B cell (primary cell): ENCODE measurements at regions of chr2 and their contacts with region 1.

Region 1: GRCh38 chr2:43105586-43106558 is 120.5 kb downstream of the ZFP36L2 start:
- DNase-seq: peak; percentile 78
- ATAC-seq: peak; percentile 65
- H3K4me3 ChIP-seq: no peak overlapping the region
- H3K4me3 Mint-ChIP-seq: peak overlapping the region; percentile 78
- H3K27ac ChIP-seq: peak overlapping the region; percentile 80 to 88
- H3K27ac Mint-ChIP-seq: peak overlapping the region; percentile 96
- H3K4me1 ChIP-seq: peaks cover 58 to 74% of the 10 kb centered on the region in 2 donors
- H3K4me1 Mint-ChIP-seq: peaks cover 61% of the 10 kb centered on the region
- H3K27me3 ChIP-seq: no peaks in the 10 kb centered on the region
- H3K27me3 Mint-ChIP-seq: no peaks in the 10 kb centered on the region
- CTCF ChIP-seq: peak; percentile 61

Region 2: DNA sequence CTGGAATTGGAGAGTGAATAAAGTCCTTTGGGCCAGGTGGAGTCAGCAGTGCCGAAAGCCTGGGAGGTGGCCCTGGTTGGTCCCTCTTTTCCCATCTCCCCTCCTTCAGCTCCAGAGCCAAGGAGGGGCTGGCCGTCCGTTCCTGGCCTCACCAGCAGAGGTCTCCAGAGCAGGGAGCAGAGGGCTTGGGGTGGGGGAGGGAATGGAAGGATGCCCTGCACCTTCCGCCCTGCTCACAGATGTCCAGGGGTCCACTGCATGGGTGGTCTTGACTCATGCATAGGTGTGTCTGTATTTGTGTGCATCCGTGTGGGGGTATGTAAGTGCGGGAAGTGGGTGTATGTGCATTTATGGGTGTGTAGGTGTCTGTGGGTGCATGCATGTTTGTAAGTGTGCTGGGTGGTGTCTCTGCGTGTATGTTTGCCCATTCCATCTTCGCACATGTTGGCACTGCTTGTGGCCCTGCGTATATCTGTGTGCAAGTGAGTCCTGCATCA is 81.3 kb before region 1 on chr2:
- CTCF ChIA-PET with region 1: no interaction called
- POLR2A ChIA-PET with region 1: no interaction called
- intact Hi-C with region 1: loop called (anchors 10 kb)
- DNase-seq: peak; percentile 60
- ATAC-seq: peak; percentile 75
- H3K4me3 ChIP-seq: no peak overlapping the region
- H3K4me3 Mint-ChIP-seq: no peak overlapping the region
- H3K27ac ChIP-seq: no peak overlapping the region
- H3K27ac Mint-ChIP-seq: no peak overlapping the region
- H3K4me1 ChIP-seq: peaks cover 7 to 8% of the 10 kb centered on the region in 2 donors
- H3K4me1 Mint-ChIP-seq: peaks cover 10% of the 10 kb centered on the region
- H3K27me3 ChIP-seq: no peaks in the 10 kb centered on the region
- H3K27me3 Mint-ChIP-seq: no peaks in the 10 kb centered on the region
- CTCF ChIP-seq: peak; percentile 55

Region 3: DNA sequence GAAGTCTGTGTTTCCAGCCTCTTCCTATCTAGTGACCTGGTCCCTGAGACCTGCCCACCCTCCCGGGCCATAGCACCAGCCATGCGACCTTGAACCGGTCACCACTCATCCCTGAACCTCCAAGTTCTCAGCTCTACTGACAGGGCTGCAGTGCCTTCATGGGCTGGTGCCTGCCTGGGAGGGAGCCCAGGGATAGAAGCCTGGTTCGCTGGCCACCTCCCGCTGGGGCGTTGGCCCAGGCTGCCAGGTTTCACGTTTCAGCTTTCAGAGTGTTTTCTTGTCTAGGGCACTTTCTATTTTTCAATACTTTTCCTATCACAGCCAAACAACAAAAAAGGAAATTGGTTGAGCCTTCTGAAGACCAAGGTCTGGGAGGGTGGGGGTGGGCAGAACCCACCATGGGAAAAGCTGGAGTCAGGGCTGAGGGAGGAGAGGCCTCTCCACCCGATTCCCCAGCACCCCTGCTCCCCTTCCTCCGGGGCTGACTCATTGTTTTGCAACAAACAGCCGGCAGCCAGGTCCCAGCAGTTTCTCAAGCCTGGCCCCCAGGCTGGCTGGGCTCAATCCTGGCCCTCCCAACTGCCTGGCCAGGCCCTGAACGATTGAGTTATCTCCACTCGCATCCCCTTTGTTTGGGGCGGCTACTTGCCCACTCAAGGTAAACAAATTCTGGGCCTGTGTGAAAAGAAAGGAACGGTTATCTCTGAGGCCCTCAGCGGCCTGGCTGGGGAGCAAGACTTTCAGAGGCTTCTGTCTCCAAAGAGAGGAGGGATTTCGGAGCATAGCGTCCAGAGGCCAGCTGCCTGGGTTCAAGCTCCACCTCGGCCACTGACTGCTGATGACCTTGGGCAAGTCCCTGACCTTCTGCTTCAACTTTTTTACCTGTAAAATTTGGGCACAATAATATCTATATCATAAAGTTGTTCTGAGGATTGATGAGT is 73.0 kb after region 1 on chr2:
- CTCF ChIA-PET with region 1: no interaction called
- POLR2A ChIA-PET with region 1: interaction called, 4 read pairs
- intact Hi-C with region 1: loop called (anchors 2 kb)
- DNase-seq: no peak
- ATAC-seq: no peak
- H3K4me3 ChIP-seq: no peak overlapping the region
- H3K4me3 Mint-ChIP-seq: no peak overlapping the region
- H3K27ac ChIP-seq: peak overlapping the region in 1 of 2 donors; percentile 50
- H3K27ac Mint-ChIP-seq: peak overlapping the region; percentile 76
- H3K4me1 ChIP-seq: peaks cover 39 to 51% of the 10 kb centered on the region in 2 donors
- H3K4me1 Mint-ChIP-seq: peaks cover 52% of the 10 kb centered on the region
- H3K27me3 ChIP-seq: no peaks in the 10 kb centered on the region
- H3K27me3 Mint-ChIP-seq: no peaks in the 10 kb centered on the region
- CTCF ChIP-seq: no peak